Upper lobe of right lung (tissue), 1 donor: ENCODE measurements at regions of chr19 and their contacts with region 1.

Region 1: GRCh38 chr19:33795370-33796163 is 1.1 kb upstream of the KCTD15 start:
- DNase-seq: peak; percentile 90
- ATAC-seq: peak; percentile 89
- H3K4me3 ChIP-seq: peak overlapping the region; percentile 70
- H3K27ac ChIP-seq: peak overlapping the region; percentile 92
- H3K4me1 ChIP-seq: peaks cover 14% of the 10 kb centered on the region
- H3K27me3 ChIP-seq: no peaks in the 10 kb centered on the region
- CTCF ChIP-seq: peak; percentile 66

Region 2: DNA sequence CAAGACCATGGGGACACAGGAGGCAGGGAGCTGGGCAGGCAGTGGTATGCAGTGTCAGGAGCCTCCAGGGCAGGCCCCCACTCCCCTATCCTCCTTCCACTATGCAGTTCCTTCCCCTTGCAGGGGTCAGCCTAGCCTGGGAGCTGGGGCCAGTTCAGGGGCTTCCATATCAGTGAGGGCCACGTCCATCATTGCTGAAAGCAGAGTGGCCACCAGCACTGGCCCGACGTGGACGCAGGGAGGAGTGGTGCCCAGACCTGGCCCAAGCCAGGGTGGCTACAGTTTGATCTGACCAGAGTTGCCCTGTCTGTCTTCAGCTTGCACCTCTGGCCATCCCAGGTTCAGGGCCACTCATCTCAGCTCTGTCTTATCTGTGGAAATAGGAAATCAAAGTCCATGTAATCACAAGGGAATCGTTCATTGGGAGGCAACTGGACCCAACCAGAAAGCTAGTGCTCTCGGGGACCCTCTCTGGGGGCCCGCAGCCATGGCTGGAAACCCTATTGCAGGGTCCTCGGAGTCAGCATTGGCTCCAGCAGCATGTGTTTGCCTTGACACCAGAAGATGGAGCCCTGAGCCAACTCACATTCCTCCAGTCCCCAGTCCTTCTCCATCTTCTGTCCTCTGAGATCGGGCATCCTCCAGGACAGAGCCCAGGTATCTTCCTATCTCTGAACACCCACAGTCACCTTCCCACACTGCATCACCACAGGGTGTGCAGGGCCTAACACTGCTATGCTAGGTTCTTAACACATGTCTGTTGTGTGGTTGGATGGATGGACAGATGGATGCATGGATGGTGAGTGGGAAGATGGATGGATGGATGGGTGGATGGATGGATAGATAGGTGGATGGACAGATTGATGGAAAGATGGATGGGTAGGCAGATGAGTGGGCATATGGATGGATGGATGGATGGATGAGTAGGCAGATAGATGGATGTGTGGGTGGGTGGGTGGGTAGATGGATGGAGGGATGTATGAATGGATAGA is 74.6 kb before region 1 on chr19:
- intact Hi-C with region 1: no loop called
- DNase-seq: peak; percentile 30
- ATAC-seq: no peak
- H3K4me3 ChIP-seq: no peak overlapping the region
- H3K27ac ChIP-seq: no peak overlapping the region
- H3K4me1 ChIP-seq: no peaks in the 10 kb centered on the region
- H3K27me3 ChIP-seq: peaks cover 4% of the 10 kb centered on the region
- CTCF ChIP-seq: no peak

Region 3: GRCh38 chr19:33883859-33884519 is 88.4 kb after region 1 on chr19:
- intact Hi-C with region 1: no loop called
- DNase-seq: no peak
- ATAC-seq: peak; percentile 79
- H3K4me3 ChIP-seq: peak overlapping the region; percentile 21
- H3K27ac ChIP-seq: peak overlapping the region; percentile 66
- H3K4me1 ChIP-seq: peaks cover 19% of the 10 kb centered on the region
- H3K27me3 ChIP-seq: no peaks in the 10 kb centered on the region
- CTCF ChIP-seq: no peak

Region 4: DNA sequence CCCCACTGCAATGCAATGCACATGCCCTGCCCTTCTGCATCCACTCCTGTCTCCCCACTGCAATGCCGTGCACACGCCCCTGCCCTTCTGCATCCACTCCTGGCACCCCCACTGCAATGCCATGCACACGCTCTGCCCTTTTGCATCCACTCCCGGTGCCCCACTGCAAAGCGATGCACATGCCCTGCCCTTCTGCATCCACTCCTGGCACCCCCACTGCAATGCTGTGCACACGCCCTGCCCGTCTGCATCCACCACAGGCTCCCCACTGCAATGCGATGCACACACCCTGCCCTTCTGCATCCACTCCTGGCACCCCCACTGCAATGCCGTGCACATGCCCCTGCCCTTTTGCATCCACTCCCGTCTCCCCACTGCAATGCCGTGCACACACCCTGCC is 99.2 kb after region 1 on chr19:
- intact Hi-C with region 1: loop called (anchors 10 kb)
- DNase-seq: no peak
- ATAC-seq: no peak
- H3K4me3 ChIP-seq: no peak overlapping the region
- H3K27ac ChIP-seq: no peak overlapping the region
- H3K4me1 ChIP-seq: no peaks in the 10 kb centered on the region
- H3K27me3 ChIP-seq: no peaks in the 10 kb centered on the region
- CTCF ChIP-seq: no peak